Right lobe of liver (tissue), 6 donors: ENCODE measurements at regions of chr17 and their contacts with region 1.

Region 1: DNA sequence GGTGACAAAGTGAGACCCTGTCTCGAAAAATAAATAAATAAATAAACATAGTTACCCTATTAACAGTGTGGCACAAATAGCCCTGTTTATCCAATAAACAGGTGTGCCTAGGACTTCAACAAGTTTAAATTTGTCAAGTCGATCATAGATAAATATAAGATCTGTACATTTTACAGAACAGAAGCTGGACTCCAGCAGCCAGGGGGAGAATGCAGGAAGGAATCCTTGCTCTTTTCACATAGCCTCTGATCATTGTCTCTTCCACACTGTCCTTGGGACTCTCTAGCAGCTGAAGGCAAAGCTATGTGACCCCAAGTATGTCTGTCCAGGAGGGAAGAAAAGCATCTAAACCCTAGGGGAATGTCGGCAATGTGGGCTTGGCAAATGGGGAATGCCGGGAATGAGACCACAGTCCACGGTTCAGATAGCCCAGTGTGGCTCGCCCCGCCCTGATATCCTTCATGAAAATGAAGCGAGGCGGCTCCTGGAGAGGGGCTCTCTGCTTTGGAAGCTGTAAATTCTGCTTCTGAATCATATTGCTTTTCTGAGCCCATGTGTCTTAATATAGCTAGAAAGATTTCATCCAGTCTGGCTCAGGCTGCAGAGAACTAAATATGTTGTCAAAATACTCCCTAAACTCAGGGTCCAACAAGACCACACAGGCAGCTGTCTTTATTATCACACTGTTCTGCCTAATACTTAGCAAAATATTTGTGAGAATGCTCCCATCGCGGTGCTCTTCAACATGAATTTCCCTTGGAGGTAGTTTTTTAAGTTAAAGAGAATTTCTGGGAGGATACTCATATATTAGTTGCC is 24.9 kb upstream of the GRB2 start:
- DNase-seq: no peak
- ATAC-seq: no peak
- H3K4me3 ChIP-seq: no peak overlapping the region
- H3K27ac ChIP-seq: no peak overlapping the region
- H3K4me1 ChIP-seq: no peaks in the 10 kb centered on the region
- H3K27me3 ChIP-seq: no peaks in the 10 kb centered on the region
- CTCF ChIP-seq: no peak
- POLR2A ChIP-seq: no peak

Region 2: GRCh38 chr17:74690409-74690825 is 740.0 kb before region 1 on chr17:
- intact Hi-C with region 1: no loop called
- DNase-seq: peak in 1 of 3 donors; percentile 30
- ATAC-seq: peak; percentile 52 to 81 (median 75)
- H3K4me3 ChIP-seq: no peak overlapping the region
- H3K27ac ChIP-seq: peak overlapping the region in 1 of 3 donors; percentile 22
- H3K4me1 ChIP-seq: no peaks in the 10 kb centered on the region
- H3K27me3 ChIP-seq: no peaks in the 10 kb centered on the region
- CTCF ChIP-seq: no peak
- POLR2A ChIP-seq: no peak

Region 3: DNA sequence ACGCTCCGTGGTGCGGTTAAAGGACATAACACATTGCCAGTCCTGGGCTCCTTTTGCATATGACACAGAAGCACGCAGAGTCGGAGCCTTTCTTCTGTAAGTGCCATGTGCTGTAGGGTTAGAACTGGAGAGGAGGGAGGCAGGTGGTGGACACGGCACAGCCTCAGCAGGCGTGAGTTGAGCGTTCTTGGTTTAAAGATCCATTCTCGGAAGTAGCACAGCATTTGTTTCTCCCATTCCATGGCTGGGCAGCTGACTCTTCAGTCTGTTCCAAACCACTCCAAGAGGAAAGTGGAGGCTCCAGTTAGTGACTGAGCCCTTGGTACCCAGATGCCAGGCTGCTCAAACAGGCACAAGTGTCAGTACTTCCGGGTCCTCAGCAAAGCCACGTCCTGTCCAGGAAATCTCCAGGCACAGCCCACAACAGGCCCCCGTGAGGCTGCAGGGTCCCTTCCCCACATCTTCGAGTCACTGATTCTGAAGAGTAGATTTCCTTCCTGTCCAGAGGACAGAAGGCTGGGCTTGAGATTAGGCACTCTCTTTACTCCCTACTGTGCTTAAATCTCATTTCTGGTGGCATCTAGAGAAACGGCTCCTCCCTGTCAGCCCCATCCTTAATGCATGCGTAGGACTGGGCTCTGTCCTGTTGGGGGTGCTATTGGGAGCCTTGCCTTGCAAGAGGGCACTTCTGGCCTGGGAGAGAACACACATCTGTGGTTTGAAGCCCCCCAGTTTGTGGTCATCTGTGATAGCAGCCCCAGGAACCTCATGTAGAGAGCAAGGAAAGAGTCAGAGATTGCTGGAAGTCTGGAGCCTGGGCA is 614.6 kb before region 1 on chr17:
- intact Hi-C with region 1: no loop called
- DNase-seq: no peak
- ATAC-seq: no peak
- H3K4me3 ChIP-seq: no peak overlapping the region
- H3K27ac ChIP-seq: no peak overlapping the region
- H3K4me1 ChIP-seq: no peaks in the 10 kb centered on the region
- H3K27me3 ChIP-seq: no peaks in the 10 kb centered on the region
- CTCF ChIP-seq: no peak
- POLR2A ChIP-seq: no peak

Region 4: GRCh38 chr17:74963656-74964055 is 466.7 kb before region 1 on chr17:
- intact Hi-C with region 1: no loop called
- DNase-seq: no peak
- ATAC-seq: no peak
- H3K4me3 ChIP-seq: no peak overlapping the region
- H3K27ac ChIP-seq: no peak overlapping the region
- H3K4me1 ChIP-seq: no peaks in the 10 kb centered on the region
- H3K27me3 ChIP-seq: no peaks in the 10 kb centered on the region
- CTCF ChIP-seq: no peak
- POLR2A ChIP-seq: no peak

Region 5: GRCh38 chr17:75504347-75504964 is 74.1 kb after region 1 on chr17:
- intact Hi-C with region 1: loop called in 1 of 2 experiments (anchors 10 kb)
- DNase-seq: peak; percentile 86 to 89 (median 88)
- ATAC-seq: peak; percentile 78 to 82 (median 80)
- H3K4me3 ChIP-seq: no peak overlapping the region
- H3K27ac ChIP-seq: peak overlapping the region in 1 of 3 donors; percentile 13
- H3K4me1 ChIP-seq: peaks cover 0 to 13% (median 5%) of the 10 kb centered on the region in 4 donors
- H3K27me3 ChIP-seq: no peaks in the 10 kb centered on the region
- CTCF ChIP-seq: peak; percentile 67 to 83 (median 78)
- POLR2A ChIP-seq: no peak